Transverse colon (tissue), 4 donors: ENCODE measurements at regions of chrX and their contacts with region 1.

Region 1: GRCh38 chrX:54066841-54067240 is 22.6 kb upstream of the PHF8 start:
- DNase-seq: no peak
- H3K4me3 ChIP-seq: no peak overlapping the region
- H3K27ac ChIP-seq: no peak overlapping the region
- H3K4me1 ChIP-seq: no peaks in the 10 kb centered on the region
- H3K27me3 ChIP-seq: no peaks in the 10 kb centered on the region
- CTCF ChIP-seq: no peak
- EP300 ChIP-seq: no peak
- POLR2A ChIP-seq: no peak

Region 2: DNA sequence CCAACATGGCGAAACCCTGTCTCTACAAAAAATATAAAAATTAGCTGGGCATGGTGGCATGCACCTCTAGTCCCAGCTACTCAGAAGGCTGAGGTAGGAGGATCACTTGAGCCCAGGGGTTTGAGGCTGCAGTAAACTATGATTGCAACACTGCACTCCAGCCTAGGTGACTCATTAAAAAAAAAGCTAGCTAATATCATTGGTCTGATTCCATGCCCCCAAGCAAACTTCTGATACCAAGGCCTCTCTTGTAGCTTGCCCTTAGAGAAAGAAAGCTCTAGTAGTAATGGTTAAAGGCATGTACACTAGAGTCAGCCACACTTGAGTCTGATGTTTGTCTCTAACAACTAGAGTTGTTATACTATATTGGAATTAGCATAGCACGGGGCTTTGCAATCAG is 10.1 kb after region 1 on chrX:
- in situ Hi-C with region 1: no loop called
- intact Hi-C with region 1: no loop called
- DNase-seq: no peak
- H3K4me3 ChIP-seq: no peak overlapping the region
- H3K27ac ChIP-seq: no peak overlapping the region
- H3K4me1 ChIP-seq: no peaks in the 10 kb centered on the region
- H3K27me3 ChIP-seq: no peaks in the 10 kb centered on the region
- CTCF ChIP-seq: no peak
- EP300 ChIP-seq: no peak
- POLR2A ChIP-seq: no peak

Region 3: GRCh38 chrX:54171527-54172250 is 104.8 kb after region 1 on chrX:
- in situ Hi-C with region 1: loop called in 1 of 4 experiments (anchors 25 kb)
- intact Hi-C with region 1: no loop called
- DNase-seq: no peak
- H3K4me3 ChIP-seq: no peak overlapping the region
- H3K27ac ChIP-seq: no peak overlapping the region
- H3K4me1 ChIP-seq: no peaks in the 10 kb centered on the region
- H3K27me3 ChIP-seq: no peaks in the 10 kb centered on the region
- CTCF ChIP-seq: no peak
- EP300 ChIP-seq: no peak
- POLR2A ChIP-seq: no peak